Sigmoid colon (tissue), 7 donors: ENCODE measurements at regions of chr16 and their contacts with region 1.

Region 1: GRCh38 chr16:57519796-57520360 is 16.5 kb downstream of the CCDC102A start:
- DNase-seq: peak; percentile 88
- H3K4me3 ChIP-seq: no peak overlapping the region
- H3K27ac ChIP-seq: no peak overlapping the region
- H3K4me1 ChIP-seq: peaks cover 0 to 3% (median 0%) of the 10 kb centered on the region in 4 donors
- H3K27me3 ChIP-seq: no peaks in the 10 kb centered on the region
- CTCF ChIP-seq: peak; percentile 77 to 96 (median 86)
- EP300 ChIP-seq: no peak
- POLR2A ChIP-seq: no peak

Region 2: DNA sequence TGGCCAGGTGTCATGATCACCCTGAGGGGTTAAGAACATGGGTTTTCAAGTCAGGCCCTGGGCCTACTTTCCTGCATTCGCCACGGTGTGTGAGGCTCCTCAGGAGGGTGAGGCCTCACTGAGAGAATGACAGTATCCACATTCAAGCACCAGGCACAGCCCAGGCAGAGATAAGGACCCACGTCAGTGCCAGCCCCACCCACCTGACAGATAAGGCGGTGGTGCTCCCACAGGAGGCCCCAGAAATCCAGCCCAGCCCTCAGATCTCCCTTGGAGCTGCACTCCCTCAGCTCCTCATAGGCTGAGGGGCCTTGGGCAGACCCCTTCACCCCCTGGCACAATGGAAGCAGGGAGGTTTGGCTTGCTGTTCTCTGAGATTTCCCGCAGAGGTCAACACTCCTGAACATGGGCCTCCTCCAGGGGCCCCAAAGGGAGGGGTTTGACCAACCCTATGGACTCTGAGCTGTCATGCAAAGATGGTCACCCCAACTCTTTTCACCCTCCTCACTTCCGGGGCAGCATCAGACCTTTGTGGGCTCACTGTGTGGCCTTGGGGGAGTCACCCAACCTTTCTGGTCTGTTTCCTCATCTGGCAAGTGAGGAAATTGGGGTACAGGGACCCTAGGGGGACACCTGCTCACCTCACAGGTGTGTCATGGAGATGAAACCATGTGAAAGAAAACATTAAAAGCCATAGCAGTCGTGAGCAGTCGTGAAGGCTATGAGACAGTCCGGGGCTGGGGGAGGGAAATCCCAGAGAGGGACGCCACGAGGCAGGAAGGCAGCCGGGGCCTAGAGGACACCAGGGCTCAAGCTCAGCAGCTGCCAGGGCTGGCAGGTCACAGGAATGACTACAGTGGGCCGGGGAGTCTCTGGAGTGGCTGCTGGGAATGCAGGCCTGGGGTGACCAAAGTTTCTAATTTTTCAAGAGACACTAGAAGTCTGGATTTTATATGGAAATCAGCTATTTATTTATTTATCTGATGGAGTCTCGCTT is 250.8 kb before region 1 on chr16:
- intact Hi-C with region 1: no loop called
- DNase-seq: peak; percentile 39
- H3K4me3 ChIP-seq: no peak overlapping the region
- H3K27ac ChIP-seq: no peak overlapping the region
- H3K4me1 ChIP-seq: peaks cover 0 to 4% (median 0%) of the 10 kb centered on the region in 4 donors
- H3K27me3 ChIP-seq: no peaks in the 10 kb centered on the region
- CTCF ChIP-seq: no peak
- EP300 ChIP-seq: no peak
- POLR2A ChIP-seq: peak in 1 of 2 donors; percentile 75

Region 3: GRCh38 chr16:57422026-57422944 is 97.6 kb before region 1 on chr16:
- intact Hi-C with region 1: loop called (anchors 1 kb)
- DNase-seq: peak; percentile 80
- H3K4me3 ChIP-seq: no peak overlapping the region
- H3K27ac ChIP-seq: peak overlapping the region in 2 of 4 donors; percentile 20 to 29
- H3K4me1 ChIP-seq: peaks cover 0 to 25% (median 19%) of the 10 kb centered on the region in 4 donors
- H3K27me3 ChIP-seq: no peaks in the 10 kb centered on the region
- CTCF ChIP-seq: peak; percentile 19 to 65 (median 50)
- EP300 ChIP-seq: no peak
- POLR2A ChIP-seq: no peak

Region 4: DNA sequence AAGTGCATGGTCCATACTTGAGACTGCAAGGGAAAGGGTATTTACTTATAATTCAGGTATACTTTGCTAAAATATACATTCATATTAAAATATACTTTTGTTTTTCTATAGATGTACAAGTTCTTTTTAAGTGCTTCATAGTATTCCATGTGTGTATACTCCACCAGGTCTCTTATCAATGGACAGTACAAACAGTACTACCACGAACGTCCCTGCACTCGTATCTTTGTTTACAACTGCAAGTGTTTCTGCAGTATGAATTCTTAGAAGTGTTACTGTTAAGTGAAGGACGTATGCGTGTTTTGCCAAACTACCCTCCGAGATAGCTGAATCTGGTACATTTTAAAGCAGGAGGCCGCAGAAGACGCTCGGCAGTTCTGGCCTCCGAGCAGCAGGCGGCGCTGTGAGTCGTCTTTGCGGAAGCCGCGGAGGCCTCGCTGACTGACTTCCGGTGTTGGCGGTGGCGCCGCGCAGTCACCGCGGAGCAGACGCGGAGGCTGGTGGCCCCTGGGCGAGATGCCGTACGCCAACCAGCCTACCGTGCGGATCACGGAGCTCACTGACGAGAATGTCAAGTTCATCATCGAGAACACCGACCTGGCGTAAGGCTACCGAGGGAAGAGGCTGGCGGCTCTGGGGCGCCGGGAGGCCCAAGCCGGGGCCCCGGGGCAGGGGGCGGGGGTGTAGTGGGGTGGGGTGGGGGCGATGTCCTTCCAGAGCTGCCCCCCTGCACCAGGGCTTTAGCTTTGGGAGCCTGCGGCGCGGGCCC is 57.5 kb before region 1 on chr16 and contains the start of gene POLR2C:
- intact Hi-C with region 1: loop called (anchors 5 kb)
- DNase-seq: peak; percentile 93
- H3K4me3 ChIP-seq: peak within 1 kb of the TSS; percentile 93 to 99 (median 98)
- H3K27ac ChIP-seq: peak within 1 kb of the TSS; percentile 87 to 92 (median 90)
- H3K4me1 ChIP-seq: peaks cover 0 to 25% (median 21%) of the 10 kb centered on the region in 4 donors
- H3K27me3 ChIP-seq: no peaks in the 10 kb centered on the region
- CTCF ChIP-seq: peak; percentile 86 to 95 (median 94)
- EP300 ChIP-seq: no peak
- POLR2A ChIP-seq: peak; percentile 88 to 94
- total RNA-seq, gene POLR2C: 60.7 to 141 (median 101) TPM

Region 5: GRCh38 chr16:57576429-57576870 is 56.6 kb after region 1 on chr16:
- intact Hi-C with region 1: no loop called
- DNase-seq: peak; percentile 78
- H3K4me3 ChIP-seq: no peak overlapping the region
- H3K27ac ChIP-seq: no peak overlapping the region
- H3K4me1 ChIP-seq: peaks cover 0 to 4% (median 0%) of the 10 kb centered on the region in 4 donors
- H3K27me3 ChIP-seq: peaks cover 3 to 21% (median 5%) of the 10 kb centered on the region in 3 donors
- CTCF ChIP-seq: peak; percentile 64 to 93 (median 84)
- EP300 ChIP-seq: no peak
- POLR2A ChIP-seq: no peak